Caco-2 (cell line): ENCODE measurements at regions of chr6 and their contacts with region 1.

Region 1: DNA sequence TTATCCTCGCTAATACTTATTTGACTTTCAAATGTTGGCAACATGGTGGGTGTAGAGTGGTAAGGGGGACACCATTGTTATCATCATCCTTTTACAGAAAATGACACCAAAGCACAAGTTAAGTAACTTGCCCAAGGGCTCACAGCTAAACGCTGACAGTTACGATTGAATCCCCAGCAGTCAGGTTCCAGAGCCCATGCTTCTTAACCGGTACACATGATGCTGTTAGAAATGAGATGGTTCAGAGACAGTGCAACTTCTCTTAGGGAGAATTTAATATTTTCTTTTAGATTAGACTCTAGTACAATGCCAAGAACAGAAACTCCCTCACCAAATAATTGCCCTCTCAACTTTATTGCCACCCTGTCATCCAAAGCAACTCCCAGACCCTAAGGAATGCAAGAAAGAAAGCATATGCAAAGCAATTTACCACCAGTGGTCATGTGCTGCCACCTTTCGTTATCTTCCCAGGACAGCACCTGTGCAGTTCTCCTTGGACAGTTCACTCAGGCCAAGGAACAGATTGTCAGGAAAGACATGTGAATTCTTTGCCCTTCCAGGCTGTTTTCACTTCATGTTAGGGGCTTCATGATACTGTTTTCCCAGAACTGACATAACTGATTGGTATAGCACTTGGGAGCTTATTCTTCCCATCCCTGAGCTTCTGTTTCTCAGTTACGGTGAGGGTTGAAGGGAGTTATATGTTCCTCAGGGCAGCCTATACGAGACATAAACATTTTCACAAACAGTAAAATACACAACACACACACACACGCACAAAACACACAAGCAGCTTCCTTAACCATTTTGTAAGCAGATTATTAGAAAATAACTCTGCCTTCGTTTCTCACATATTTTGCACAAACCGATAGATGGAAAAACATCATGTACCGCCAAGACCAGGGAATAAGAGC is 5.1 kb downstream of the HLA-DMA start:
- DNase-seq: peak; percentile 62 to 73
- H3K4me3 ChIP-seq: no peak overlapping the region
- H3K4me3 Mint-ChIP-seq: no peak overlapping the region
- H3K27ac Mint-ChIP-seq: no peak overlapping the region
- H3K4me1 ChIP-seq: no peaks in the 10 kb centered on the region
- H3K4me1 Mint-ChIP-seq: no peaks in the 10 kb centered on the region
- H3K27me3 ChIP-seq: no peaks in the 10 kb centered on the region
- H3K27me3 Mint-ChIP-seq: peaks cover 7% of the 10 kb centered on the region
- CTCF ChIP-seq: peak; percentile 69 to 78

Region 2: GRCh38 chr6:32885698-32886286 is 62.0 kb before region 1 on chr6:
- CTCF ChIA-PET with region 1: interaction called, 5 read pairs
- POLR2A ChIA-PET with region 1: no interaction called
- intact Hi-C with region 1: loop called (anchors 1 kb)
- DNase-seq: peak in 1 of 2 experiments; percentile 42
- H3K4me3 ChIP-seq: no peak overlapping the region
- H3K4me3 Mint-ChIP-seq: no peak overlapping the region
- H3K27ac Mint-ChIP-seq: no peak overlapping the region
- H3K4me1 ChIP-seq: no peaks in the 10 kb centered on the region
- H3K4me1 Mint-ChIP-seq: no peaks in the 10 kb centered on the region
- H3K27me3 ChIP-seq: no peaks in the 10 kb centered on the region
- H3K27me3 Mint-ChIP-seq: peaks cover 7% of the 10 kb centered on the region
- CTCF ChIP-seq: peak; percentile 50 to 57

Region 3: DNA sequence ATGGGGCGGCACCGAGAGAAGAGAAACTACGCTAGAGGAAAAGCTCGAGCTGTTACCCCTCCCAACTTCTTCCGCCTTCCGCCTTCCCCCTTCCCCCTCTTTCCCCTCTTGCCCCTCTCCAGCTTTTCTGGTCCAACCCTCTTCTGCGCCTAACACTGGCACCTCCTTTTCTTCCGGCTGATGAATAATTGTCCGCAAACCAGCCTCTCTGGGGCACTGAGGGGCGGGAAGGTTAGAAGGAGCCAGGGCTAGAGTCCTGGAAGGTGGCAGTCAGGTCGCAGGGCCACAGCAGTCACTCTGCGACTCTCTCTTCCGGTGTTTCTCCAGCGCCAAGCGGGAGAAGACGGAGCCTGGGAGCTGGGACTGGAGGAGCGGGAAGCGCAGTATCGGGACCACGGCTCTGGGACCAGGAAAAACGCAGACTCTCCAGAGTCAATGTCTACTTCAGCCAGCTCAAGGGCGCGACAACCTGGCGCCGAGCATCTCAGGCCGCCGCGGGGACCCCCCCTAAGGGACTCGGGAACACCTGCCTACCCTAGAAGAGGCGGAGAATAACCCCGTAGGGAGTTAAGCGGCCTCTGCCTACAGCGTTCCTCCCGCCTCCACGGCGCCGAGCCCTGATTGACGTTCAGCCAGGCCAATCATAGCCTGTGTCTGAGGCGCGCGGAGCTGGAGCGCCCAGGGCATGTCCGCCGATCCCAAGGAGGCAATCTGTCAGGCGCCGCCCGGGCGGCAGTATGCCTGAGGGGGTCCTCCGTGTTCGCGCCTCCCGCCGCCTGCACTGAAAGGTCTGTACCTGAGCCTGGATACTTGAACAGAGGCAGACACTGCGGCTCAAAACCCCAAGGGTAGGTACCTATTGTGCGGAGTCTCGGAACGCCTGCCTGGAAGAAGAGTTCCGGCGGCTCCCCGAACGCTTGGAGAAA is 53.5 kb before region 1 on chr6:
- CTCF ChIA-PET with region 1: interaction called, 4 read pairs
- POLR2A ChIA-PET with region 1: interaction called, 3 read pairs
- intact Hi-C with region 1: loop called (anchors 2 kb)
- DNase-seq: peak; percentile 93 to 96
- H3K4me3 ChIP-seq: peak overlapping the region; percentile 68
- H3K4me3 Mint-ChIP-seq: peak overlapping the region; percentile 99
- H3K27ac Mint-ChIP-seq: peak overlapping the region; percentile 96
- H3K4me1 ChIP-seq: no peaks in the 10 kb centered on the region
- H3K4me1 Mint-ChIP-seq: peaks cover 7% of the 10 kb centered on the region
- H3K27me3 ChIP-seq: no peaks in the 10 kb centered on the region
- H3K27me3 Mint-ChIP-seq: peaks cover 4% of the 10 kb centered on the region
- CTCF ChIP-seq: no peak

Region 4: DNA sequence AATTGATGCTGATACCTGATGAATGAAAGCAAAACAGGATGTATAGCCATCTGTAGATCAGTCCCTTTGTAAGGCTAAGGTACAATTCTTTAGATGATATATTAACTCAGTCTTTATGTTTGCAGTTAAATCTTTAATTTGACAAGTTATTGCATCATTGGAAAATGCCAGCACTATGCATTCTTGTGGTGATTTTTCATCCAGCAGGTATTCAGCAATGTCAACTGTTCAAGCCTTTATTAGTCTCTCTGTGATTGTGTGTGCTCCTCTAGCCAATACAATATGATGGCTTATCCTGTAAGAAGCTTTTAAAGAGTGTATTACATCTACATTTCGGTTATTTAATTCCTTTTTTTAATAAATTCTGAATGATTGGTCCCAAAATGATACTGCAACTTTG is 41.3 kb before region 1 on chr6:
- CTCF ChIA-PET with region 1: no interaction called
- POLR2A ChIA-PET with region 1: no interaction called
- intact Hi-C with region 1: no loop called
- DNase-seq: no peak
- H3K4me3 ChIP-seq: no peak overlapping the region
- H3K4me3 Mint-ChIP-seq: no peak overlapping the region
- H3K27ac Mint-ChIP-seq: no peak overlapping the region
- H3K4me1 ChIP-seq: no peaks in the 10 kb centered on the region
- H3K4me1 Mint-ChIP-seq: no peaks in the 10 kb centered on the region
- H3K27me3 ChIP-seq: no peaks in the 10 kb centered on the region
- H3K27me3 Mint-ChIP-seq: peaks cover 4% of the 10 kb centered on the region
- CTCF ChIP-seq: no peak

Region 5: DNA sequence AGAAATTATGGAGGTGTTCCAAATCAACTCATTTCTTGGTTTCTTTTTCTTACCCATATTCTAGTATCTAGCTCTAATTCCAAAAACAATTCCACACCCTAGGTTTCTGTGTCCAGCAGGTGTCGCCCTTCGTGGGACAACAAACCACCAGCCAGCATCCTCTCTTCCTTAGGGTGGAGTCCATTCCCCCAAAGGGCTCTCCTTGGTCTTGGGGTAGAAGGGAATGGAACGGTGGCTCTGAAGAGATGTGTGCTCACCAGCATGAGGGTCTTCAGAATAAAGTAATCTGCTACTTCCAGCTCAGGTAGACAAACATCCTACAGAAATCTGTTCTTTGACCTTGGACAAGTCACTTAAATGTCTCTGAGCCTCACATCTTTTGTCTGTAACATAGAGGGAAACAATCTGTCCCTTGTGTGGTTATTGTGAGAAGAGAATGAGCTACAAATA is 14.1 kb before region 1 on chr6:
- CTCF ChIA-PET with region 1: interaction called, 6 read pairs
- POLR2A ChIA-PET with region 1: no interaction called
- intact Hi-C with region 1: loop called (anchors 1 kb)
- DNase-seq: peak; percentile 66 to 76
- H3K4me3 ChIP-seq: no peak overlapping the region
- H3K4me3 Mint-ChIP-seq: no peak overlapping the region
- H3K27ac Mint-ChIP-seq: no peak overlapping the region
- H3K4me1 ChIP-seq: no peaks in the 10 kb centered on the region
- H3K4me1 Mint-ChIP-seq: no peaks in the 10 kb centered on the region
- H3K27me3 ChIP-seq: no peaks in the 10 kb centered on the region
- H3K27me3 Mint-ChIP-seq: peaks cover 22% of the 10 kb centered on the region
- CTCF ChIP-seq: peak; percentile 63 to 77